ENCODE measurements at regions of chr6 and their contacts with region 1.

Region 1: DNA sequence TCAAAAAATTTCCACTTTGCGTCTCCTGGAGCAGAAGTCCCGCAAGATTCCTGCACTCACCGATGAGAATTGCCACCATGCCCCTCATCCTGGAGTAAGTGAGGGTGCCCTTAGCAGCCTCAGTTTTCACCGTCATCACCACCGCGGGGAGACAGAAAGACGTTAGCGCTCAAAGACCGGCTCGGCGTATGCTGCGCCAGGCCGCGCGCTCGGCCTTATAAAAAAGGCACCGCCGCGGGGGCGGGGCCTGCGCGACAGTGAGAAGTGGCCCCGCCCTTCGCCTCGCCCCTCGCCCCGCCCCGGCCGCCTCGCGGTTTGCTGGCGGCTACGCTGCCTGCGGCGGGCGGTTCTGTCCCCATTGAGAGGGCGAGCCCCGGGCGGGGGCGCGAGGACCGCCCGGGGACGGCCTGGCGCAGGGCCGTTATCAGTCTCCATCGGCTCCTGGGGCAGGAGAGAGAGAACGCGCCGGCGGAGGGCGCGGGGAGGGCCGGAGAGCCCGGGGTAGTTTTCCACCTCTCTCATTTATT is 122.3 kb upstream of the SLC2A12 start:
- DNase-seq: peak; percentile 88 to 93 (median 91)
- H3K4me3 ChIP-seq: peak overlapping the region; percentile 39 to 98
- H3K4me3 Mint-ChIP-seq: peak overlapping the region; percentile 95 to 98 (median 98)
- H3K27ac ChIP-seq: peak overlapping the region; percentile 86
- H3K27ac Mint-ChIP-seq: peak overlapping the region; percentile 91 to 99 (median 96)
- H3K4me1 ChIP-seq: peaks cover 68% of the 10 kb centered on the region
- H3K4me1 Mint-ChIP-seq: peaks cover 39 to 78% (median 63%) of the 10 kb centered on the region in 4 donors
- H3K27me3 ChIP-seq: no peaks in the 10 kb centered on the region
- H3K27me3 Mint-ChIP-seq: no peaks in the 10 kb centered on the region

Region 2: GRCh38 chr6:134015719-134016557 is 158.8 kb before region 1 on chr6:
- CTCF ChIA-PET with region 1: no interaction called
- POLR2A ChIA-PET with region 1: no interaction called
- intact Hi-C with region 1: no loop called
- DNase-seq: no peak
- H3K4me3 ChIP-seq: no peak overlapping the region
- H3K4me3 Mint-ChIP-seq: no peak overlapping the region
- H3K27ac ChIP-seq: no peak overlapping the region
- H3K27ac Mint-ChIP-seq: no peak overlapping the region
- H3K4me1 ChIP-seq: no peaks in the 10 kb centered on the region
- H3K4me1 Mint-ChIP-seq: no peaks in the 10 kb centered on the region
- H3K27me3 ChIP-seq: no peaks in the 10 kb centered on the region
- H3K27me3 Mint-ChIP-seq: peaks cover 4 to 10% of the 10 kb centered on the region in 2 donors

Region 3: GRCh38 chr6:134161036-134161435 is 13.7 kb before region 1 on chr6:
- CTCF ChIA-PET with region 1: interaction called, 12 read pairs
- POLR2A ChIA-PET with region 1: no interaction called
- intact Hi-C with region 1: no loop called
- DNase-seq: no peak
- H3K4me3 ChIP-seq: no peak overlapping the region
- H3K4me3 Mint-ChIP-seq: no peak overlapping the region
- H3K27ac ChIP-seq: no peak overlapping the region
- H3K27ac Mint-ChIP-seq: no peak overlapping the region
- H3K4me1 ChIP-seq: no peaks in the 10 kb centered on the region
- H3K4me1 Mint-ChIP-seq: no peaks in the 10 kb centered on the region
- H3K27me3 ChIP-seq: no peaks in the 10 kb centered on the region
- H3K27me3 Mint-ChIP-seq: no peaks in the 10 kb centered on the region

Region 4: DNA sequence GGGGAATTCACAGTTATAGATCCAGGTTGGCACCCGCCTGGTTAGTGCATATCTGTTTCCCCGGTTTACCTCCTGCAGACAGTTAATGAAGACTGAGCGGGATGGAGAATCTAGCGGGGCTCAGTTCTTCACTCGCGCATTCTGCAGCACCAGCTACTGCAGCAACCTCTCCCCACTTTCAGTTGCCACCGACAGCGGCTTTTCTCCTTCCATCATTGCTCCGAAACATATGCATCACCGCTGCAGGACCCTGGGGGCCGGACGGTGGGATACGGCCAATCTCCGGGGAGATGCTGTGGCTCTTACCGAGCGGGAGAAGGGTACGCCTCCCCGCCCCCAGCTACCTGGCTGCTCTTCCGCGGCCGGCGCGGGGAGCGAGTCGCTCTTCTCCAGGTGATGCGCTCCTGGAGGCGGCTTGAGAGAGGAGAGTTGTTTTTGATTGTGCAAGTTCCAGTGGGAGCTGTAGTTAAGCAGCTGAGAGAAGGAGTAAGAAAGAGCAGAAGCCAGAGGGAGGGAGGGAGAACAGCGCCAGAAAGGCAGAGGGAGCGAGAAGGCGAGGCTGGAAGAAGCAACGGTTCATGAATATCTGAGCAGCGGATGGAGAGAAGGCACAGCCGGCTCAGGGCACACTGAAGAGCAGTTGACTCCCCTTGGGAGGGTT is 142.9 kb after region 1 on chr6 and contains the start of gene SGK1:
- CTCF ChIA-PET with region 1: interaction called, 3 read pairs
- POLR2A ChIA-PET with region 1: no interaction called
- intact Hi-C with region 1: loop called (anchors 1 kb)
- DNase-seq: peak in 4 of 5 donors; percentile 16 to 26 (median 22)
- H3K4me3 ChIP-seq: peak within 1 kb of the TSS; percentile 24 to 37
- H3K4me3 Mint-ChIP-seq: peak within 1 kb of the TSS; percentile 81 to 94 (median 90)
- H3K27ac ChIP-seq: no peak within 1 kb of the TSS
- H3K27ac Mint-ChIP-seq: peak within 1 kb of the TSS in 4 of 7 donors; percentile 7 to 52 (median 21)
- H3K4me1 ChIP-seq: peaks cover 4% of the 10 kb centered on the region
- H3K4me1 Mint-ChIP-seq: peaks cover 9 to 17% (median 14%) of the 10 kb centered on the region in 4 donors
- H3K27me3 ChIP-seq: no peaks in the 10 kb centered on the region
- H3K27me3 Mint-ChIP-seq: peaks cover 3 to 18% of the 10 kb centered on the region in 2 donors
- total RNA-seq, gene SGK1: 14.3 to 16.0 TPM

Region 5: GRCh38 chr6:134453870-134454510 is 279.3 kb after region 1 on chr6:
- CTCF ChIA-PET with region 1: interaction called, 5 read pairs
- POLR2A ChIA-PET with region 1: no interaction called
- intact Hi-C with region 1: loop called (anchors 5 kb)
- DNase-seq: no peak
- H3K4me3 ChIP-seq: no peak overlapping the region
- H3K4me3 Mint-ChIP-seq: no peak overlapping the region
- H3K27ac ChIP-seq: no peak overlapping the region
- H3K27ac Mint-ChIP-seq: no peak overlapping the region
- H3K4me1 ChIP-seq: peaks cover 14% of the 10 kb centered on the region
- H3K4me1 Mint-ChIP-seq: peaks cover 5 to 10% (median 7%) of the 10 kb centered on the region in 4 donors
- H3K27me3 ChIP-seq: no peaks in the 10 kb centered on the region
- H3K27me3 Mint-ChIP-seq: no peaks in the 10 kb centered on the region

Region 6: DNA sequence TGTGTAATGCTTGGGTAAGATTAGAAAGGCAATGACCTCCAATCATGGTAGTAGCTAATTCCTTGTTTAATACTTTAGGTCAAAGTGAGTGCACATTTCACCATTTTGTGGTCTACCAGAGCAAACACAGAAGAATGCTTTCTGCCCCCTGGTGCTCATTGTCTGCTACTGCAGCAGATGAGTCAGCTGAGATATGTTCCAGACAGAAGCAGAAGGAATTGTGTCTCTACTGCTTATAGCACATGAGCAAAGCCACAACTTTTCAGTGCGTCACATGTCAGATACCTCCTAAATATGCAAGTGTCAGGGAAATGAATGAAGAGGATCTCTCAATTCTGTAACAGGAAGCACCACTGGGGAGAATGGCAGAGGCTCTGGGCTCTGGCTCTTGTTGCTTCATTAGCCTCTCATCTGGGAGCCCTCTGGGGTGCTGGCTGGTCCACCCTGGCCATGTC is 466.3 kb after region 1 on chr6:
- CTCF ChIA-PET with region 1: interaction called, 158 read pairs
- POLR2A ChIA-PET with region 1: interaction called, 37 read pairs
- intact Hi-C with region 1: loop called (anchors 1 kb)
- DNase-seq: peak; percentile 73 to 78 (median 75)
- H3K4me3 ChIP-seq: no peak overlapping the region
- H3K4me3 Mint-ChIP-seq: no peak overlapping the region
- H3K27ac ChIP-seq: no peak overlapping the region
- H3K27ac Mint-ChIP-seq: no peak overlapping the region
- H3K4me1 ChIP-seq: peaks cover 7% of the 10 kb centered on the region
- H3K4me1 Mint-ChIP-seq: peaks cover 10 to 20% (median 15%) of the 10 kb centered on the region in 4 donors
- H3K27me3 ChIP-seq: no peaks in the 10 kb centered on the region
- H3K27me3 Mint-ChIP-seq: no peaks in the 10 kb centered on the region

Region 7: GRCh38 chr6:134938896-134939295 is 764.2 kb after region 1 on chr6:
- CTCF ChIA-PET with region 1: interaction called, 23 read pairs
- POLR2A ChIA-PET with region 1: interaction called, 4 read pairs
- intact Hi-C with region 1: loop called (anchors 1 kb)
- DNase-seq: peak in 4 of 5 donors; percentile 6 to 83 (median 24)
- H3K4me3 ChIP-seq: no peak overlapping the region
- H3K4me3 Mint-ChIP-seq: no peak overlapping the region
- H3K27ac ChIP-seq: no peak overlapping the region
- H3K27ac Mint-ChIP-seq: peak overlapping the region in 2 of 7 donors; percentile 42 to 46
- H3K4me1 ChIP-seq: peaks cover 6% of the 10 kb centered on the region
- H3K4me1 Mint-ChIP-seq: peaks cover 0 to 11% (median 0%) of the 10 kb centered on the region in 4 donors
- H3K27me3 ChIP-seq: no peaks in the 10 kb centered on the region
- H3K27me3 Mint-ChIP-seq: no peaks in the 10 kb centered on the region